Heart right ventricle (tissue), 16 donors: ENCODE measurements at regions of chr7 and their contacts with region 1.

Region 1: GRCh38 chr7:158829342-158830210 is at the start of gene ESYT2:
- DNase-seq: peak; percentile 99 to 100
- ATAC-seq: peak; percentile 94 to 98 (median 96)
- H3K4me3 ChIP-seq: peak within 1 kb of the TSS; percentile 74 to 99 (median 94)
- H3K27ac ChIP-seq: peak within 1 kb of the TSS; percentile 94 to 100 (median 100)
- H3K4me1 ChIP-seq: peaks cover 0 to 43% (median 29%) of the 10 kb centered on the region in 9 donors
- H3K27me3 ChIP-seq: no peaks in the 10 kb centered on the region
- CTCF ChIP-seq: peak in 4 of 9 donors; percentile 18 to 41 (median 36)
- total RNA-seq, gene ESYT2: 44.3 to 79.2 (median 50.0) TPM

Region 2: GRCh38 chr7:158704704-158705468 is 124.7 kb before region 1 on chr7 and contains the start of gene NCAPG2:
- intact Hi-C with region 1: loop called in 1 of 10 experiments (anchors 5 kb)
- DNase-seq: peak; percentile 97 to 99
- ATAC-seq: peak; percentile 99
- H3K4me3 ChIP-seq: peak within 1 kb of the TSS; percentile 64 to 100 (median 89)
- H3K27ac ChIP-seq: peak within 1 kb of the TSS; percentile 34 to 96 (median 87)
- H3K4me1 ChIP-seq: peaks cover 3 to 21% (median 8%) of the 10 kb centered on the region in 9 donors
- H3K27me3 ChIP-seq: no peaks in the 10 kb centered on the region
- CTCF ChIP-seq: peak in 6 of 9 donors; percentile 21 to 44 (median 30)
- total RNA-seq, gene NCAPG2: 3.5 to 8.0 (median 4.6) TPM

Region 3: GRCh38 chr7:158856883-158857668 is 27.5 kb after region 1 on chr7:
- intact Hi-C with region 1: loop called in 4 of 10 experiments (anchors 2 to 5 kb)
- DNase-seq: no peak
- ATAC-seq: peak in 3 of 8 donors; percentile 2 to 40 (median 3)
- H3K4me3 ChIP-seq: peak overlapping the region; percentile 59 to 98 (median 86)
- H3K27ac ChIP-seq: peak overlapping the region; percentile 80 to 94 (median 90)
- H3K4me1 ChIP-seq: peaks cover 0 to 48% (median 32%) of the 10 kb centered on the region in 9 donors
- H3K27me3 ChIP-seq: no peaks in the 10 kb centered on the region
- CTCF ChIP-seq: no peak

Region 4: DNA sequence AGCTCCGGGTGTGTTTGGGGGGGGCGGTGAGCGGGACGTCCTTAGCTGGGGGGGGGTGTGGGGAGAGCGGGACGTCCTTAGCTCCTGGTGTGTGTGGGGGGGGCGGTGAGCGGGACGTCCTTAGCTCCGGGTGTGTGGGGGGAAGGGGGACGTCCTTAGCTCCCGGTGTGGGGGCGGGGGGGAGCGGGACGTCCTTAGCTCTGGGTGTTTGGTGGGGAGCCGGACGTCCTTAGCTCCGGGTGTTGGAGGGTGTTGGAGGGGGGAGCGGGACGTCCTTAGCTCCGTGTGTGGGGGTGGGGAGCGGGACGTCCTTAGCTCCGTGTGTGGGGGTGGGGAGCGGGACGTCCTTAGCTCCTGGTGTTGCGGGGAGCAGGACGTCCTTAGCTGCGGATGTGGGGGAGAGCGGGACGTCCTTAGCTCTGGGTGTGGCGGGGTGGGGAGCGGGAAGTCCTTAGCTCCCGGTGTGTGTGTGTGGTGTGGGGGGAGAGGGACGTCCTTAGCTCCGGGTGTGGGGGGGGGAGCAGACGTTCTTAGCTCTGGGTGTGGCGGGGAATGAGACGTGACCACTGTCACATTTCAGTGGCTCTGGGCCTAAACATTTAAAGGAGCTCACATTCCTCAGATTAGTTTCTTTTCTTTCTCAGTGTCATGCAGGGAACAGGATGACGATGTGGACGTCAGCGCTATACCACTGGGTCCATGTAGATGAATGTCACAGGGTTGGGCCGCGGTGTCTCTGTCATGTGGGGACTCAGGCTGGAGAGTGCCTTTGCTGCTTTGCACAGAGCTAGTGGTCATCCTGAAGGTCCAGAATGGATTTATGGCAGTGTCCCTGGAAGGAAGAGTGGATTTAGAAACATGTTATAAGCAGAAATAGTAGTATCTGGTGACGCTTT is 34.3 kb after region 1 on chr7:
- intact Hi-C with region 1: loop called in 5 of 10 experiments (anchors 1 to 5 kb)
- DNase-seq: peak; percentile 80 to 84
- ATAC-seq: peak; percentile 87 to 93 (median 90)
- H3K4me3 ChIP-seq: peak overlapping the region in 9 of 10 donors; percentile 30 to 55 (median 51)
- H3K27ac ChIP-seq: peak overlapping the region; percentile 85 to 98 (median 92)
- H3K4me1 ChIP-seq: peaks cover 15 to 64% (median 36%) of the 10 kb centered on the region in 9 donors
- H3K27me3 ChIP-seq: no peaks in the 10 kb centered on the region
- CTCF ChIP-seq: no peak

Region 5: GRCh38 chr7:159068488-159068811 is 238.9 kb after region 1 on chr7:
- intact Hi-C with region 1: no loop called
- DNase-seq: peak; percentile 80 to 81
- ATAC-seq: peak; percentile 85 to 89 (median 86)
- H3K4me3 ChIP-seq: peak overlapping the region in 1 of 10 donors; percentile 19
- H3K27ac ChIP-seq: peak overlapping the region; percentile 47 to 91 (median 78)
- H3K4me1 ChIP-seq: peaks cover 6 to 64% (median 36%) of the 10 kb centered on the region in 9 donors
- H3K27me3 ChIP-seq: no peaks in the 10 kb centered on the region
- CTCF ChIP-seq: no peak